AG04449 (cell line): ENCODE measurements at regions of chr6 and their contacts with region 1.

Region 1: DNA sequence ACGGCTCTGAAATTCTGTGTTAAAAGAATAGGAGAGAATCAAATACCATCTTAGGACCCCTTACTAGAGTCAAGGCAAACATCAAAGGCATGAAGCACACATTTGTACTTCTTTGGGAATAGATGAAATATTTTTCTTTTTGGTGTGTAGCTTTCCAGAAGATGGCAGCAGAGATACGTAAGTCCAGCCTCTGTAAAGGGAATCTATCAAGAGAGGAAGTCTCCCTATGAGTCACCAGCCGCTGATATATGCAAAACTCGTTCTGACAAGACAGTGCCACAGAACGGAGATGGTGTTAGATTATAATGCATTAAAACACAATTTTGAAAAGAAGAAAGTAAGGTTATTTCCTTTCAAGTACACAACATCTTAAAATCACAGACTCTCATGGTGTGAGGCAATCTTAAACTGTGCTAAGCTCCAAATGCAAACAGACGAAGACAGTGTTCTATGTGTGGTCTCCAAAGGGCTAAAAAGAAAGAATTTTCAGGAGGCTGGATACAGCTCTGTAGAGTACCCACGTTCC is 120.0 kb upstream of the AGPAT4 start:
- DNase-seq: no peak
- H3K4me3 ChIP-seq: peak overlapping the region; percentile 23
- CTCF ChIP-seq: peak; percentile 55

Region 2: GRCh38 chr6:161038229-161039031 is 355.5 kb before region 1 on chr6:
- CTCF ChIA-PET with region 1: no interaction called
- POLR2A ChIA-PET with region 1: no interaction called
- DNase-seq: peak; percentile 86
- H3K4me3 ChIP-seq: no peak overlapping the region
- CTCF ChIP-seq: peak; percentile 40

Region 3: GRCh38 chr6:161406646-161407045 is 12.7 kb after region 1 on chr6:
- CTCF ChIA-PET with region 1: interaction called, 39 read pairs
- POLR2A ChIA-PET with region 1: interaction called, 3 read pairs
- DNase-seq: peak; percentile 44
- H3K4me3 ChIP-seq: no peak overlapping the region
- CTCF ChIP-seq: no peak

Region 4: GRCh38 chr6:161444464-161444863 is 50.6 kb after region 1 on chr6:
- CTCF ChIA-PET with region 1: interaction called, 10 read pairs
- POLR2A ChIA-PET with region 1: no interaction called
- DNase-seq: no peak
- H3K4me3 ChIP-seq: no peak overlapping the region
- CTCF ChIP-seq: peak; percentile 16

Region 5: GRCh38 chr6:161498359-161498758 is 104.5 kb after region 1 on chr6:
- CTCF ChIA-PET with region 1: interaction called, 15 read pairs
- POLR2A ChIA-PET with region 1: no interaction called
- DNase-seq: no peak
- H3K4me3 ChIP-seq: no peak overlapping the region
- CTCF ChIP-seq: peak; percentile 25

Region 6: GRCh38 chr6:161694995-161695394 is 301.1 kb after region 1 on chr6:
- CTCF ChIA-PET with region 1: interaction called, 21 read pairs
- POLR2A ChIA-PET with region 1: no interaction called
- DNase-seq: no peak
- H3K4me3 ChIP-seq: no peak overlapping the region
- CTCF ChIP-seq: peak; percentile 40